Left colon (tissue), 2 donors: ENCODE measurements at regions of chr1 and their contacts with region 1.

Region 1: DNA sequence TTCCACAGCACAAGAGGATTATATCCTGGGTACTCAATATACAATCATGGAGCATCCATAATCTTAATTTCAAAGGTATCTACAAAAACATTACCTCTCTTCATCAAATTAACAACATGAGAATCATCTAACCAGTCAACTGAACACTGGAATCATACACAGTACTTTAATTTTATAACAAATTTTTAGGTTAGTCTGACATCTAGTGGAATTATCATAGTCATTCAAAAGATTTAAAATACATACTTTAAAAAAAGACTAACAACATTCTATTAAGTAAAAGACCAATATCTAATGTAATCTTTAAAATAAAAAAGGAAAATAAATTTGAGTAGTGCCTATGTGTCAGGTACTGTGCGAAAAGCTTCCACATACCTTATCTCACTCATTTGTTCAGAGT is 16.8 kb upstream of the SH3GLB1 start:
- DNase-seq: no peak
- ATAC-seq: peak; percentile 66

Region 2: DNA sequence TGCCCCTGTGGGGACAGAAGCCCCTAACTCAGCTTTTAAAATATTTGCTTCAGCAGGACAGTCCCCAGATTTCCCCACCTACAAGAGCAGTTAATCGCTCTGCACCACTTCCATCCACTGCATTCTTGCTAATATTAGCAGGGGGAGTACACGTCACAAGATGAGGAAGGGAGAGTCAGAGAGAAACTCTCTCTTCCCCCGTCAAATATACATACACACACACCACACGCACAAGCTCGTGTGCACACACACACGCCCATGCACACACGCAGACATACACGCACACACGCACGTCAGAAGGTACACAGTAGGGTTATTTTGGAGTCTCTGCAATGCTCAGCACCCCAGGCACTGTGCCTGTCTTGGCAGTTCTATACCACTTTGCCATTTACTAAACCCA is 216.7 kb before region 1 on chr1:
- intact Hi-C with region 1: loop called in 1 of 2 experiments (anchors 5 kb)
- DNase-seq: no peak
- ATAC-seq: no peak